CD4-positive, alpha-beta T cell (primary cell): ENCODE measurements at regions of chr3 and their contacts with region 1.

Region 1: GRCh38 chr3:60081381-60082095 is 1031.7 kb upstream of the CFAP20DC start:
- DNase-seq: peak in 3 of 14 experiments; percentile 46 to 66 (median 47)
- ATAC-seq: peak; percentile 43
- H3K4me3 ChIP-seq: peak overlapping the region; percentile 54
- H3K4me3 Mint-ChIP-seq: peak overlapping the region; percentile 87
- H3K27ac ChIP-seq: peak overlapping the region; percentile 6 to 61
- H3K27ac Mint-ChIP-seq: peak overlapping the region; percentile 88
- H3K4me1 ChIP-seq: peaks cover 13% of the 10 kb centered on the region
- H3K4me1 Mint-ChIP-seq: peaks cover 54% of the 10 kb centered on the region
- H3K27me3 ChIP-seq: no peaks in the 10 kb centered on the region
- H3K27me3 Mint-ChIP-seq: no peaks in the 10 kb centered on the region
- CTCF ChIP-seq: no peak

Region 2: DNA sequence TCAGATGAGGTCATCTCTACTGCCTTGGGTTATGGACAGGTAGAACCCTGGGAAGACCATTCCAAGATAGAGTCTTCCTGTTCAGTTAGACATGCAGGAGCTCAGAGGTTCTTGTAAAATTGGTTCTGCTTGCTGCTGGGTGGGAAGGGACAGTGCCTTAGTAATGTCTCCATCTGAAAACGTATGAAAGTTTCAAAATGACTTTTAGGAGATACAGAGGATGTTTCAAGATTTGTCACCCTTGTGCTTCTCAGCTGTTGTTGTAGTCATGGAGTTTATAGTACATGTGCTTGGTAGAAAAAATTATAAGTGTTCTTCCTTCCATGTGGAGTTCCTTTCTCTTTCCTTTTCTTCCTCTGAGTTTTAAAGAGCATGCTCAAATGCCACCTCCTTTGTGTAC is 146.5 kb before region 1 on chr3:
- CTCF ChIA-PET with region 1: no interaction called
- POLR2A ChIA-PET with region 1: interaction called, 3 read pairs
- intact Hi-C with region 1: loop called in 1 of 2 experiments (anchors 5 kb)
- DNase-seq: no peak
- ATAC-seq: no peak
- H3K4me3 ChIP-seq: no peak overlapping the region
- H3K4me3 Mint-ChIP-seq: peak overlapping the region; percentile 42
- H3K27ac ChIP-seq: no peak overlapping the region
- H3K27ac Mint-ChIP-seq: peak overlapping the region; percentile 81
- H3K4me1 ChIP-seq: peaks cover 6% of the 10 kb centered on the region
- H3K4me1 Mint-ChIP-seq: peaks cover 96% of the 10 kb centered on the region
- H3K27me3 ChIP-seq: no peaks in the 10 kb centered on the region
- H3K27me3 Mint-ChIP-seq: no peaks in the 10 kb centered on the region
- CTCF ChIP-seq: no peak

Region 3: GRCh38 chr3:59998058-59998457 is 83.5 kb before region 1 on chr3:
- CTCF ChIA-PET with region 1: no interaction called
- POLR2A ChIA-PET with region 1: interaction called, 16 read pairs
- intact Hi-C with region 1: no loop called
- DNase-seq: no peak
- ATAC-seq: no peak
- H3K4me3 ChIP-seq: no peak overlapping the region
- H3K4me3 Mint-ChIP-seq: no peak overlapping the region
- H3K27ac ChIP-seq: no peak overlapping the region
- H3K27ac Mint-ChIP-seq: no peak overlapping the region
- H3K4me1 ChIP-seq: peaks cover 26% of the 10 kb centered on the region
- H3K4me1 Mint-ChIP-seq: peaks cover 80% of the 10 kb centered on the region
- H3K27me3 ChIP-seq: no peaks in the 10 kb centered on the region
- H3K27me3 Mint-ChIP-seq: no peaks in the 10 kb centered on the region
- CTCF ChIP-seq: no peak

Region 4: GRCh38 chr3:60017631-60018030 is 63.9 kb before region 1 on chr3:
- CTCF ChIA-PET with region 1: interaction called, 9 read pairs
- POLR2A ChIA-PET with region 1: interaction called, 22 read pairs
- intact Hi-C with region 1: no loop called
- DNase-seq: peak in 12 of 14 experiments; percentile 6 to 83 (median 46)
- ATAC-seq: peak; percentile 87
- H3K4me3 ChIP-seq: no peak overlapping the region
- H3K4me3 Mint-ChIP-seq: peak overlapping the region; percentile 74
- H3K27ac ChIP-seq: peak overlapping the region; percentile 35 to 71
- H3K27ac Mint-ChIP-seq: peak overlapping the region; percentile 94
- H3K4me1 ChIP-seq: peaks cover 48% of the 10 kb centered on the region
- H3K4me1 Mint-ChIP-seq: peaks cover 78% of the 10 kb centered on the region
- H3K27me3 ChIP-seq: no peaks in the 10 kb centered on the region
- H3K27me3 Mint-ChIP-seq: no peaks in the 10 kb centered on the region
- CTCF ChIP-seq: no peak

Region 5: DNA sequence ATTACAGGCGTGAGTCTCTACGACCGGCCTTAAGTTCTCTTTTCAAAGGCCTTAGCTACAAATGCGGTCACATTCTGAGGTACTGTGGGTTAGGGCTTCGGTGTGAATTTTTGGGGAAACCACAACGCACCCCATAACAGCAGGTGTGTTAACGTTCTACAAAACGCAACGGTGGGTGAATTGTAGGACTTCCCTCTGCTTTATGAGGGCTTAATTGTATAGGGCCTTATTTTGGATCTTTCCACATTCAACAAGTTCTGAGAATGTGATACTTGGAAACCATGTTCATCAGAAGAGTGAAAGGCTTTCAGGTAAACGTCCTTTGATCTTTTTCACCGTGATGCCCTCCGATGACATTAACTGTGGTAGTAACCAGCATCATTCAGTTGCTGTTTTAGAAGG is 33.1 kb before region 1 on chr3:
- CTCF ChIA-PET with region 1: interaction called, 3 read pairs
- POLR2A ChIA-PET with region 1: interaction called, 3 read pairs
- intact Hi-C with region 1: loop called in 1 of 2 experiments (anchors 2 kb)
- DNase-seq: peak in 10 of 14 experiments; percentile 15 to 76 (median 35)
- ATAC-seq: peak; percentile 84
- H3K4me3 ChIP-seq: peak overlapping the region; percentile 17
- H3K4me3 Mint-ChIP-seq: peak overlapping the region; percentile 76
- H3K27ac ChIP-seq: peak overlapping the region; percentile 56 to 59
- H3K27ac Mint-ChIP-seq: peak overlapping the region; percentile 93
- H3K4me1 ChIP-seq: peaks cover 14% of the 10 kb centered on the region
- H3K4me1 Mint-ChIP-seq: peaks cover 91% of the 10 kb centered on the region
- H3K27me3 ChIP-seq: no peaks in the 10 kb centered on the region
- H3K27me3 Mint-ChIP-seq: no peaks in the 10 kb centered on the region
- CTCF ChIP-seq: no peak

Region 6: GRCh38 chr3:60053526-60054265 is 27.8 kb before region 1 on chr3:
- CTCF ChIA-PET with region 1: interaction called, 12 read pairs
- POLR2A ChIA-PET with region 1: interaction called, 21 read pairs
- intact Hi-C with region 1: loop called in 1 of 2 experiments (anchors 2 kb)
- DNase-seq: peak in 6 of 14 experiments; percentile 20 to 70 (median 34)
- ATAC-seq: no peak
- H3K4me3 ChIP-seq: no peak overlapping the region
- H3K4me3 Mint-ChIP-seq: peak overlapping the region; percentile 50
- H3K27ac ChIP-seq: no peak overlapping the region
- H3K27ac Mint-ChIP-seq: peak overlapping the region; percentile 91
- H3K4me1 ChIP-seq: peaks cover 14% of the 10 kb centered on the region
- H3K4me1 Mint-ChIP-seq: peaks cover 88% of the 10 kb centered on the region
- H3K27me3 ChIP-seq: no peaks in the 10 kb centered on the region
- H3K27me3 Mint-ChIP-seq: no peaks in the 10 kb centered on the region
- CTCF ChIP-seq: no peak

Region 7: GRCh38 chr3:60064210-60065178 is 17.0 kb before region 1 on chr3:
- CTCF ChIA-PET with region 1: interaction called, 4 read pairs
- POLR2A ChIA-PET with region 1: interaction called, 21 read pairs
- intact Hi-C with region 1: loop called in 1 of 2 experiments (anchors 2 kb)
- DNase-seq: peak in 4 of 14 experiments; percentile 36 to 53 (median 43)
- ATAC-seq: peak; percentile 83
- H3K4me3 ChIP-seq: no peak overlapping the region
- H3K4me3 Mint-ChIP-seq: peak overlapping the region; percentile 67
- H3K27ac ChIP-seq: peak overlapping the region; percentile 25 to 67
- H3K27ac Mint-ChIP-seq: peak overlapping the region; percentile 88
- H3K4me1 ChIP-seq: peaks cover 10% of the 10 kb centered on the region
- H3K4me1 Mint-ChIP-seq: peaks cover 80% of the 10 kb centered on the region
- H3K27me3 ChIP-seq: no peaks in the 10 kb centered on the region
- H3K27me3 Mint-ChIP-seq: no peaks in the 10 kb centered on the region
- CTCF ChIP-seq: no peak